ENCODE measurements at regions of chr22 and their contacts with region 1.

Region 1: DNA sequence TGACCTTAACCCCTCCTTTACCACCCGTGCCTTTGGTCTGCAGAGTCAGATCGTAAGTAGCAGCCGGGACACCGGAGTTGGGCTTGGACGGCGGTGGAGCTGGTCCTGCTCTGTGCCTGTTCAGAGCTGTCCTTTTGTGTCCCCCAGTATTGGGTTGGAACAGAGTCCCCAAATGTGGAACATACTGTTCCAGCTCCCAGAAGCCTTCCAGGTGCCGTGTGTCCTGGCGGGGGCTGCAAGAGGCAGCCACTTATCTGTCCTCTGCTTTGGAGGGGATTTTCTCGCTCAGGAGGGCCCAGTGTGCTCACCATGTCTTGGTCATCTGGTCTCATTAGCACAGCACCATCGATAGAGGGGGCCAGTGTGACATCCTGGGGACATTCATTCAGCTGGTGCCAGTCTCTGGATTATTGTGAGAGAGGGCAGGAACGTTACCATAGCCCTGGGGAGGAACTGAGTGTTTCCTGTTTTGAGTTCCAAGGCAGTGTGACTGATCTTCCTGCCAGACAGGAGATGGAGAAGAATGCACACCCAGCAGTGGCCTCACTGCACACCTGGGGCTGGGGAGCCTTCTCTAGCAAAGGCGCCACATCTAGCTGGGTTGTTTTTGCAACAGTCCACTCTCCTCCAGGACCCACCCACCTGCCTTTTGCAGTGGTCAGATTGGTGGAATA is 12.4 kb downstream of the CRELD2 start:
- DNase-seq: no peak
- H3K4me3 ChIP-seq: peak overlapping the region in 2 of 8 donors; percentile 1 to 49
- H3K27ac ChIP-seq: peak overlapping the region; percentile 46 to 100 (median 88)
- H3K4me1 ChIP-seq: peaks cover 44 to 76% (median 70%) of the 10 kb centered on the region in 6 donors
- H3K27me3 ChIP-seq: peaks cover 0 to 12% (median 0%) of the 10 kb centered on the region in 7 donors
- CTCF ChIP-seq: peak; percentile 40 to 94 (median 77)
- POLR2A ChIP-seq: no peak

Region 2: DNA sequence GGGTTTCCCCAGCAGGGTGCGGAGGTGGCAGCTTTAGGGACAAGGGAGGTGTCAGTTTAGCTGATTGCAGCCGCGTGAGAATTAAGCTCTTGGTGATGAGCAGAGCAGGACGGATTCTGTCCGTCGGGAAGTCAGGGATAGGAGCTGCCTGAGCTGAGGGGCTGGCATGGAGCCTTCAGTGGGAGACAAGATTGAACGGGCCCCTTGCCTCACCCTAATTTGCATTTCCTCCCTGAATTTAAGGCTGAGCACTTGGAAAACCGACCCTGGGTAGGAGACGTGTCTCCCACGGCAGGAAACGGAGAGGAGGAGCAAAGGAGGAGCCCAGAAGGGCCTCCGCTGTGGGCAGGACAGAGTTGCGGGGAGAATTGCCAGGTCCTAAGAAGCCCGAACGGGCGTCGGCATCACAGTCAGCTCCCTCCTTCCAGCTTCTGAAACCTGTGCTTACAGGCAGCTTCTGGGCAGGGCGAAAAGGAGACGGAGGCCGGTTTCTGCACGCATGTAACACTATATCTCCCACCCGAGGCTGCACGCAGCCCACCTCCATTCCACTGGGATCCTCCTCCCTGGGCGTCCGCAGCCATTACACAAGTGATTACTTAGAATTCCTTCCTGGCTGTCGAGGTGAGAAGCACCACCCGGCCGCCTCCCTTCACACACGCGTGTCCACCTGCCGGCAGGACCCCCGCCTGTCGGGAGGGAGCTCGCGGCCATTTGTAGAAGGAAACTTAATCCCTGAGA is 449.0 kb before region 1 on chr22:
- intact Hi-C with region 1: no loop called
- DNase-seq: no peak
- H3K4me3 ChIP-seq: peak overlapping the region in 3 of 8 donors; percentile 8 to 48 (median 36)
- H3K27ac ChIP-seq: peak overlapping the region in 4 of 8 donors; percentile 5 to 48 (median 34)
- H3K4me1 ChIP-seq: peaks cover 0 to 26% (median 4%) of the 10 kb centered on the region in 6 donors
- H3K27me3 ChIP-seq: peaks cover 0 to 26% (median 0%) of the 10 kb centered on the region in 7 donors
- CTCF ChIP-seq: no peak
- POLR2A ChIP-seq: no peak

Region 3: GRCh38 chr22:49767355-49768062 is 163.4 kb before region 1 on chr22:
- intact Hi-C with region 1: loop called (anchors 10 kb)
- DNase-seq: peak; percentile 62
- H3K4me3 ChIP-seq: no peak overlapping the region
- H3K27ac ChIP-seq: no peak overlapping the region
- H3K4me1 ChIP-seq: peaks cover 0 to 10% (median 2%) of the 10 kb centered on the region in 6 donors
- H3K27me3 ChIP-seq: no peaks in the 10 kb centered on the region
- CTCF ChIP-seq: peak; percentile 53 to 89 (median 73)
- POLR2A ChIP-seq: no peak

Region 4: DNA sequence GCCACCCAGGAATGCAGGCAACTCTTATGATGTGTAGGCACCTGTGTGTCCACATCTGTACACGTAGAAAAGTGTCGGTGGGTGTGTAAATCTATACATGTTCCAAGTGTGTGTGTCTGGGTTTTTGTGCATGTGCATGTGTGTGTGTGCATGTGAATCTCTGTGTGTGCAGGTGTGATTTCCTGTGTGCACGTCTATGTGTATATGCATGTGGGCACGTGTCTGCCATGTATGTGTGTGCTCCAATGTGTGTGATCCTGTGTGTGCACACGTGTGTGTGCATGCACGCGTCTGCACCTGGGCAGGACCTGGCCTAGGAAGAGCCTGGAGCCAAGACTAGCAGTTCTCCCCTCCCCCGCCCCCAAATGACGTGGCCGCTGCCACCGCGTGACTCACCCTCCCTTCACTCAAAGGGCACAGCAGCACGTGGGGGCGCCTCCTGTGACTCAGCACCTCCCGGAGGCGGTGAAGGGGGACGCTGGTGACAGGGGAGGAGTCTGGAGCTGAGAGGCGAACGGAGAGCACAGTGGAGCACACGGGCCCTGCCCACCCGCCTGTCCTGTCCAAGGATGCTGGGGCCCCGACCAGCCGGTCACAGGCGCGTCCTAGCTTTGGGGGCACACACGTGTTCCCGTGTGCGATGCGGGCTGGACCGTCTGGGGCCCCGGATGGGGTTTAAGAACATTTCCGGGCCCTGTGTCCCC is 39.8 kb after region 1 on chr22:
- intact Hi-C with region 1: loop called (anchors 5 kb)
- DNase-seq: peak; percentile 96
- H3K4me3 ChIP-seq: peak overlapping the region; percentile 30 to 70 (median 43)
- H3K27ac ChIP-seq: peak overlapping the region; percentile 74 to 99 (median 84)
- H3K4me1 ChIP-seq: peaks cover 29 to 73% (median 63%) of the 10 kb centered on the region in 6 donors
- H3K27me3 ChIP-seq: peaks cover 0 to 12% (median 0%) of the 10 kb centered on the region in 7 donors
- CTCF ChIP-seq: peak in 1 of 11 experiments; percentile 19
- POLR2A ChIP-seq: peak; percentile 48 to 61 (median 51)

Region 5: DNA sequence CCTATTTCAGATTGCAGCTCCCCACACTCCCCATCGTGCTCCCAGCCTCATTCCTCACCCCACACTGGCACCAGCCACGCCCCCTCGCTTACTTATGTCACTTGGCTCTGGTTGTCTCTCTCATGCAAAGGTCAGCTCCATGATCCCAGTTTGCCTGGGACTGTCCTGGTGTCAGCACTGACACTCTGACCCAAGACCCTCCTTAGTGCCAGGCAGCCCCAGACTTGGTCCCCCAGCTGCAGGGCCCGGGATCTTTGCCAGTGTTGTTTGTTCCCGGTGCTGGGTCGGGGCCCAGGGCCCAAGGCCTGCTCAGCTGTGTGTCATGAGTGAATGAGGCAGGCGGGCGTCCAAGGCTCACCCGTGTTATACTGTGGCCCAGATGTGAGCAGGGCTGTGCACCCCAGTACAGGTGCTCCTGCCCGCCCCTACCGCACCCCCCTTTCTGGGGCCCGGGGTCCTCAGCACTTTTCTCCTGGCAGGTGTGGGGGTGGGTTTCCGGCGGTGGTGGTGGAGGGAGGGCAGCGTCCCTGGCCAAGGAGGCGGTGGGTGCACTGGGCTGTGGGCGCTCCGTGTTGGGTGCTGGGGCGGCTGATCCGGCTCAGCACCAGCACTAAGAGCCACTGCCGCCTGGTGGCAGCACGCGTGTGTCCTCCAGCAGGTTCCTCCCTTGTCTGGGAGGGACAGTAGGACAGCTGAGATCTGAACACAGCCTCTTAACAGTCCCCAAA is 62.2 kb after region 1 on chr22:
- intact Hi-C with region 1: loop called (anchors 5 kb)
- DNase-seq: peak; percentile 94
- H3K4me3 ChIP-seq: no peak overlapping the region
- H3K27ac ChIP-seq: no peak overlapping the region
- H3K4me1 ChIP-seq: peaks cover 4 to 20% (median 10%) of the 10 kb centered on the region in 6 donors
- H3K27me3 ChIP-seq: no peaks in the 10 kb centered on the region
- CTCF ChIP-seq: peak; percentile 73 to 93 (median 85)
- POLR2A ChIP-seq: no peak

Region 6: GRCh38 chr22:50030297-50031188 is 99.7 kb after region 1 on chr22:
- intact Hi-C with region 1: loop called (anchors 2 kb)
- DNase-seq: peak; percentile 95
- H3K4me3 ChIP-seq: peak overlapping the region in 2 of 8 donors; percentile 1 to 53
- H3K27ac ChIP-seq: no peak overlapping the region
- H3K4me1 ChIP-seq: peaks cover 0 to 30% (median 14%) of the 10 kb centered on the region in 6 donors
- H3K27me3 ChIP-seq: peaks cover 0 to 71% (median 29%) of the 10 kb centered on the region in 7 donors
- CTCF ChIP-seq: peak; percentile 86 to 96 (median 90)
- POLR2A ChIP-seq: no peak

Measured in spleen (tissue), 13 donors.